ENCODE measurements at regions of chr12 and their contacts with region 1.

Region 1: GRCh38 chr12:109995686-109996482 is at the start of gene GIT2:
- DNase-seq: peak; percentile 95
- H3K4me3 Mint-ChIP-seq: peak within 1 kb of the TSS; percentile 92
- H3K27ac Mint-ChIP-seq: peak within 1 kb of the TSS; percentile 82
- H3K4me1 Mint-ChIP-seq: peaks cover 23% of the 10 kb centered on the region
- H3K27me3 Mint-ChIP-seq: no peaks in the 10 kb centered on the region
- CTCF ChIP-seq: peak; percentile 10
- total RNA-seq, gene GIT2: 56.0 TPM in 2 replicates

Region 2: DNA sequence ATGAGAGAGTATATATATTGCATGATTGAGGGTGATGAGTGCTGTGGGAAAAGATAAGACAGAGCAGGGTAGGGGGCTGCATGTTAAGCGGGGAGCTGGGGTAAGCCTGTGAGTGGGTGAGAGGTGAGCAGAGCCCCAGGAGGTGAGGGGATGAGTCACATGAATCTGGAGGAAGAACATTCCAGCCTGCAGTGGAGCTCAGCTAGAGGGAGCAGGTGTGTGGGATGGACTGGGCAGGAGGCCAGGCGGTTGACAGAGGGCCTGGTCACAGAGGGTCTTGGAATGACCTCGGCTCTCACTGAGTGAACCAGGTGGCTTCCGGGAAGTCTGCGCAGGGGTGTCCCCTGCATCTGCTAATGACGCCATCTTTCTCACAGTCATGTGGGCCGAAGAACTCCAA is 44.1 kb before region 1 on chr12:
- CTCF ChIA-PET with region 1: no interaction called
- intact Hi-C with region 1: loop called (anchors 5 kb)
- DNase-seq: peak; percentile 86
- H3K4me3 Mint-ChIP-seq: peak overlapping the region; percentile 0
- H3K27ac Mint-ChIP-seq: peak overlapping the region; percentile 0
- H3K4me1 Mint-ChIP-seq: peaks cover 31% of the 10 kb centered on the region
- H3K27me3 Mint-ChIP-seq: no peaks in the 10 kb centered on the region
- CTCF ChIP-seq: no peak

Region 3: GRCh38 chr12:110039085-110039807 is 43.4 kb after region 1 on chr12:
- CTCF ChIA-PET with region 1: interaction called, 3 read pairs
- intact Hi-C with region 1: loop called (anchors 5 kb)
- DNase-seq: peak; percentile 62
- H3K4me3 Mint-ChIP-seq: peak overlapping the region; percentile 70
- H3K27ac Mint-ChIP-seq: peak overlapping the region; percentile 98
- H3K4me1 Mint-ChIP-seq: peaks cover 34% of the 10 kb centered on the region
- H3K27me3 Mint-ChIP-seq: no peaks in the 10 kb centered on the region
- CTCF ChIP-seq: no peak

Measured in Calu3 (cell line).